Gastrocnemius medialis (tissue), 4 donors: ENCODE measurements at regions of chr6 and their contacts with region 1.

Region 1: GRCh38 chr6:138765896-138766655 is 7.5 kb upstream of the CCDC28A start:
- DNase-seq: no peak
- ATAC-seq: no peak
- H3K4me3 ChIP-seq: no peak overlapping the region
- H3K27ac ChIP-seq: no peak overlapping the region
- H3K4me1 ChIP-seq: no peaks in the 10 kb centered on the region
- H3K27me3 ChIP-seq: no peaks in the 10 kb centered on the region
- CTCF ChIP-seq: peak; percentile 34 to 74 (median 62)
- POLR2A ChIP-seq: no peak

Region 2: DNA sequence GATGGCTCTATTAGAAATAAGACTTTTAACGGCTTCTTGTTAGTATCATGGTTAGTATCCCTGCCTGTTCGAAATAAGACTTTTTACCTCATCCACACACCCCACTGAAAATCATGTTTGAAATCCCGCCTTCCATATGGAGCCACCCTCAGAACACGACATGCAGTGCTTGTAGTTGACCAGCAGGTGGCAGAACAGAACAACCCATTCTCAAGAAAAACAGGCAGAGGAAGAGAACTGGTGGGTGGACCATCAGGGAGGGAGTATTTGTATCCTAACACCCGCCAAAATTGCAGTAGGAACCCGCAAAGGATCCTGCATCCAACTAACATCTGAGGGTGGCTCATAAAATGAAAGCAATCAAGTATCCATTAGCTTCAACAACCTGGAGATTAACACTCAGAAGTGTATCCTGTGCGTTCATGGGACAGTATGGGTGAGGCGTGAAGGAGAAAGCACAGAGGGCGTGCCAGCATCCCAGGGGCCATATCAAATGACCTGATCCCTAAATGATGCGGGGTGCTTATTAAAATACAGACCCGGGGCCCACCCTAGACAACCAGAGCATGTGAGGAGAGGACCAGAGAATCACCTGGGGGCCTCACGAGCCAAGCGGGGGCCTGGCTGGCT is 177.2 kb before region 1 on chr6:
- in situ Hi-C with region 1: loop called (anchors 5 to 10 kb)
- intact Hi-C with region 1: loop called (anchors 1 kb)
- DNase-seq: peak in 1 of 2 donors; percentile 12
- ATAC-seq: peak; percentile 43 to 63
- H3K4me3 ChIP-seq: no peak overlapping the region
- H3K27ac ChIP-seq: no peak overlapping the region
- H3K4me1 ChIP-seq: peaks cover 0 to 12% of the 10 kb centered on the region in 2 donors
- H3K27me3 ChIP-seq: no peaks in the 10 kb centered on the region
- CTCF ChIP-seq: peak; percentile 82 to 88 (median 83)
- POLR2A ChIP-seq: no peak

Region 3: DNA sequence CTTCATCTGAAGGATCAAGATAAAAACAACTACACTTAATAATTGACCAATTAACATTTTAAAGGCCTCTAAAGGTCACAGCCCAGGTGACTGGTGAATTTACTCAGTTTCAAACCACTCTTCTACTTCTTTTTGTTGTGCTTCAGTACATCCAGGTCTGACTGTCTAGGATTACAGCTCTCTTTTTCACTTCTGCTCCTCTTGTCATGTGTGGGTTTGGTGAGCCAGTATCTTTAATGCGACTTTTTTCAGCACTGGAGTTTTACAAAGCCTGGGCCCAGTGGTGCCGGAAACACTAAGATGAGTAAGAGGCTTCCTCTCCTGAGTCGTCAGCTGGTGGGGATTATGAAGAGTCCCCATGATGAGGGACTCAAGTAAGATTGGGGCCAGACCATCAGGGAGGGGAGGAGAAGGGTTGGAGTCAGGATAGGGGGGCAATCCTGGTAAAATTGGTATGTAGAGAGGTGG is 395.8 kb after region 1 on chr6:
- in situ Hi-C with region 1: no loop called
- intact Hi-C with region 1: no loop called
- DNase-seq: no peak
- ATAC-seq: no peak
- H3K4me3 ChIP-seq: no peak overlapping the region
- H3K27ac ChIP-seq: no peak overlapping the region
- H3K4me1 ChIP-seq: peaks cover 13 to 24% of the 10 kb centered on the region in 2 donors
- H3K27me3 ChIP-seq: no peaks in the 10 kb centered on the region
- CTCF ChIP-seq: no peak
- POLR2A ChIP-seq: no peak